MCF 10A (cell line): ENCODE measurements at regions of chr9 and their contacts with region 1.

Region 1: DNA sequence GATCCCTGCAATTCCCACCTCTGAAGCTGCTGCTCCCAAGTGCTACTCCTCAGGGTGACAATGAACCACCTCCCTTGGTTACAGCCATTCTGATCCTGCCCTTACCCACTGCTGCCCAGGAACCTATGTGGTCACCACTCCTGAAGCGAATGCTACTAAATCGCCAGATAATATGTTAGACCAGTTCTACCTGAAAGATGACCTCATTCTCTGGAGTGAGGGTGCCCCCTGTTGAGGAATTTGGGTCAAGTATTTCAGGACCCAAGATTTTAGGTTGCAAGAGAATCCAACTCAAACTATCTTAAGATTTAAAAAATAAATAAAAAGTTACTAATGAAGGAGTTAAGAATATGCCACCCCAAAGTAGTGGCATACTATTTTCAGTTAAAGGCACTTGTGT is 5.8 kb upstream of the SNAPC3 start:
- DNase-seq: peak; percentile 61
- H3K4me3 Mint-ChIP-seq: no peak overlapping the region
- H3K27ac Mint-ChIP-seq: no peak overlapping the region
- H3K4me1 Mint-ChIP-seq: no peaks in the 10 kb centered on the region
- H3K27me3 Mint-ChIP-seq: no peaks in the 10 kb centered on the region
- CTCF ChIP-seq: peak; percentile 56

Region 2: DNA sequence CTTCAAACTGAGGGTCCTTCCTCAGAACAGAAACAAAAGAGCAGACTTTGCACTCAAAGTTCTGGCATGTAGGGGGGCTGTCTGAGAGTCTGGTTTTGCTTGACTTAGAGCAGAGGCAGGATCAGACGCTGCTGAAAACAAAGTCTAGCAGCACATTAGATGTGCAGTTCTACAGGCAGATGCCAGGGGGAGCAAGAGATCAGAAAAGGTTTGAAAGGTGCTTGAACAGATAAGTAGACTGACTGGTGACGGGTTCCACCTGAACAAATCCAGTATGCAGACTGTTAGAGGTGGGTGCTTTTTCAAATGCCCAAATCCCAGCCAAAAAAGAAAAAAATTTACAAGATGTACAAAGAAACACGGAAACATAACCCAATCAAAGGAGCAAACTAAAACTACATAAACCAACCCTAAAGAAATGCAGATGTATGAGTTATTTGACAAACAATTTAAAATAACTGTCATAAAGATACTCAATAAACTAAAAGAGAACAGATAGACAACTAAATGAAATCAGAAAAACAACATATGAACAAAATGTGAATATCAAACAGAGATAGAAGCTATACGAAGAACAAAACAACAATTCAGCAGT is 312.0 kb before region 1 on chr9:
- CTCF ChIA-PET with region 1: interaction called, 5 read pairs
- POLR2A ChIA-PET with region 1: no interaction called
- intact Hi-C with region 1: loop called (anchors 1 kb)
- DNase-seq: peak; percentile 57
- H3K4me3 Mint-ChIP-seq: no peak overlapping the region
- H3K27ac Mint-ChIP-seq: no peak overlapping the region
- H3K4me1 Mint-ChIP-seq: peaks cover 6% of the 10 kb centered on the region
- H3K27me3 Mint-ChIP-seq: peaks cover 43% of the 10 kb centered on the region
- CTCF ChIP-seq: peak; percentile 82

Region 3: GRCh38 chr9:15211160-15211814 is 205.6 kb before region 1 on chr9:
- CTCF ChIA-PET with region 1: interaction called, 70 read pairs
- POLR2A ChIA-PET with region 1: interaction called, 3 read pairs
- intact Hi-C with region 1: loop called (anchors 1 kb)
- DNase-seq: peak; percentile 70
- H3K4me3 Mint-ChIP-seq: no peak overlapping the region
- H3K27ac Mint-ChIP-seq: no peak overlapping the region
- H3K4me1 Mint-ChIP-seq: no peaks in the 10 kb centered on the region
- H3K27me3 Mint-ChIP-seq: no peaks in the 10 kb centered on the region
- CTCF ChIP-seq: peak; percentile 63

Region 4: GRCh38 chr9:15277400-15278090 is 139.3 kb before region 1 on chr9:
- CTCF ChIA-PET with region 1: interaction called, 14 read pairs
- POLR2A ChIA-PET with region 1: interaction called, 4 read pairs
- intact Hi-C with region 1: loop called (anchors 1 kb)
- DNase-seq: peak; percentile 28
- H3K4me3 Mint-ChIP-seq: no peak overlapping the region
- H3K27ac Mint-ChIP-seq: no peak overlapping the region
- H3K4me1 Mint-ChIP-seq: no peaks in the 10 kb centered on the region
- H3K27me3 Mint-ChIP-seq: no peaks in the 10 kb centered on the region
- CTCF ChIP-seq: peak; percentile 31

Region 5: DNA sequence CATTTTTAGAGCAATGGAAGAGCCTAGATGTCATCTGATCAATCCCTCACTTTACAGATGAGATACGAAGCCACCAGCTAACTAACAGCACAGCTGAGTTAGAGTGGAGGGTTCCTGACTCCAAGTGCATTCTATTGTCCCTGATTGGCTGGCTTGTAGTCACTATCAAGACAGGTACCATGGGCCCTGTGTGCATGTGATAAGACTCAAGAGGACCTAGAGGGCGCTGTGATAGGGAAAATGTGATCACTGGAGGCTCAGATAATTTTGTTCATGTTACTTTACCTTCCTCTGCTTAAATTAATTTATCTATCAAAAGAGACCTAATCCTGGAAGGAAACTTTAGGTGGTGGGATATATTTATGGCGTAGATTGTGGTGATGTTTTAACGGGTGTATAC is 13.7 kb before region 1 on chr9:
- CTCF ChIA-PET with region 1: interaction called, 15 read pairs
- POLR2A ChIA-PET with region 1: no interaction called
- intact Hi-C with region 1: no loop called
- DNase-seq: peak; percentile 43
- H3K4me3 Mint-ChIP-seq: no peak overlapping the region
- H3K27ac Mint-ChIP-seq: no peak overlapping the region
- H3K4me1 Mint-ChIP-seq: no peaks in the 10 kb centered on the region
- H3K27me3 Mint-ChIP-seq: no peaks in the 10 kb centered on the region
- CTCF ChIP-seq: peak; percentile 25